ENCODE measurements at regions of chr17 and their contacts with region 1.

Region 1: DNA sequence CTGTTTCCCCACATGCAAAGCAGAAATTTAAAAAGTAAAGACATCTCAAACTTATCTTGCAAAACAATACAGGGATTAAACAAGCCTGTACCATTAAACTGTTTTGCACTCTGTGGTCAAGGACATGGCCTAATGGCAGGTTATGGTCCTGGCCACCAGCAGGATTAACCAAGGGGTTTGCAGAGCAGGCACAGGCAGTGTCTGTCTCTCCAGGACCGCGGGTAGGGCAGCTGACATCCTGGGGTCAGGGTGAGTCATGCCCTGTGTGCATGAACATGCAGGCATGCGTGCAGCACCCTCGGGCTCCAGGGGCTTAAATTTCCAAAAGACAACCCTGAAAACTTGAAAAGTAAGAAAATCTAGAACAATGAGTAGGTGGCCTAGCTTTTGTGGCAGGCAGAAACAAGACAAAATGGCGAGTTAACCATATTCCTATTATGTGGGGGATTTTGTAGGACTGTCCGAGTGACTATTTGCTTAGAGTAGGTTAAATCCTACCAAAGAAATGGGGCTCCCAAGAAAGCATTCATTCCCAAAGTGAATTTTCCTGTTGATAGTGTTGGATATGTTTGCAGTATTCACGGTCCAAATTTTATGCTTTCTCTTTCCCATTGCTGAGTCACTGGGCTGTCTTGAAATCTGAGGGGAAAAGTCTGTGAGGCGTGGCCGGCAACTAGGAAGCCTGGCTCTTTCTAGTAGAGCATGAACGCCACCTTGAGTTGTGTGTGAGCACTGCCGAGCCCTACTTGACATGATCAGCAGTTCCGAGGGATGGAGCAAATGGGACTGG is 158.4 kb upstream of the FAM20A start:
- DNase-seq: peak; percentile 86 to 89
- H3K4me3 ChIP-seq: peak overlapping the region; percentile 34
- H3K4me3 Mint-ChIP-seq: peak overlapping the region; percentile 77
- H3K27ac Mint-ChIP-seq: peak overlapping the region; percentile 89
- H3K4me1 ChIP-seq: peaks cover 13% of the 10 kb centered on the region
- H3K4me1 Mint-ChIP-seq: peaks cover 7% of the 10 kb centered on the region
- H3K27me3 ChIP-seq: no peaks in the 10 kb centered on the region
- H3K27me3 Mint-ChIP-seq: no peaks in the 10 kb centered on the region
- CTCF ChIP-seq: peak; percentile 92 to 93

Region 2: DNA sequence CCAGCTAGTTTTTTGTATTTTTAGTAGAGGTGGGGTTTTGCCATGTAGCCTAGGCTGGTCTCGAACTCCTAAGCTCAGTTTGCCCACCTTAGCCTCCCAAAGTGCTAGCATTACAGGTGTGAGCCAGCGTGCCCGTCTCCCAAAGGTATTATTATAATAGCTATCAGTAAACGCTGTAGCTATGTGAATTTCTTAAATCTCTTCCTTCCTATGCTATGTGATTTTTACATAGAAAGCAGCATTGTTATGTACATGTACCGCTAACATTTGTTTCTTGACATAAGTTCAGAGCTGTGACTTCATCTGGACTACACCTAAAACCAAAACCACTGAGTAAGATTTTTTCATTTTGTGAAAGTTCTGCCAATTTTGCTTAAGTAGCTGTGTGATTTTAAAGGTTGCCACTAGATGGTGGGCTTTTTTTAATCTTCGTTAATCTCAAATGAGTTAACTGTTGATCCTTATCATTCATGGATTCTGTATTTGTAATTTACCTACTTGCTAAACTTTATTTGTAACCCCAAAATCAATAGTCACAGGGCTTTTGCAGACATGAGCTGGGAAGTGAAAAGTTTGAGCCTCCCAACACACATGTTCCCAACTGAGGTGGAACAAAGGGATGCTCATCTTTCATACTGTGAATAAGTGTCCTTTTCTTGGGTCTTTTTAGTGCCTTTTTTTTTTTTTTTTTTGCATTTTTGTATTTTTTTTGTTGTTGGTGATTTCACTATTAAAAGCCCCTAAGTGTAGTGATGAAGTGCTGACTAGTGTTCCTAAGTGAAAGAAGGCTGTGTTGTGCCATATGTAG is 225.4 kb before region 1 on chr17:
- CTCF ChIA-PET with region 1: no interaction called
- POLR2A ChIA-PET with region 1: no interaction called
- intact Hi-C with region 1: loop called (anchors 1 kb)
- DNase-seq: no peak
- H3K4me3 ChIP-seq: no peak overlapping the region
- H3K4me3 Mint-ChIP-seq: no peak overlapping the region
- H3K27ac Mint-ChIP-seq: no peak overlapping the region
- H3K4me1 ChIP-seq: no peaks in the 10 kb centered on the region
- H3K4me1 Mint-ChIP-seq: no peaks in the 10 kb centered on the region
- H3K27me3 ChIP-seq: no peaks in the 10 kb centered on the region
- H3K27me3 Mint-ChIP-seq: no peaks in the 10 kb centered on the region
- CTCF ChIP-seq: peak in 1 of 2 experiments; percentile 49

Region 3: GRCh38 chr17:68608515-68609130 is 150.9 kb before region 1 on chr17:
- CTCF ChIA-PET with region 1: interaction called, 4 read pairs
- POLR2A ChIA-PET with region 1: no interaction called
- intact Hi-C with region 1: loop called (anchors 1 kb)
- DNase-seq: no peak
- H3K4me3 ChIP-seq: no peak overlapping the region
- H3K4me3 Mint-ChIP-seq: no peak overlapping the region
- H3K27ac Mint-ChIP-seq: no peak overlapping the region
- H3K4me1 ChIP-seq: no peaks in the 10 kb centered on the region
- H3K4me1 Mint-ChIP-seq: no peaks in the 10 kb centered on the region
- H3K27me3 ChIP-seq: no peaks in the 10 kb centered on the region
- H3K27me3 Mint-ChIP-seq: peaks cover 3% of the 10 kb centered on the region
- CTCF ChIP-seq: no peak

Region 4: GRCh38 chr17:68733241-68734176 is 26.0 kb before region 1 on chr17:
- CTCF ChIA-PET with region 1: no interaction called
- POLR2A ChIA-PET with region 1: no interaction called
- intact Hi-C with region 1: loop called (anchors 2 kb)
- DNase-seq: peak; percentile 82 to 95
- H3K4me3 ChIP-seq: no peak overlapping the region
- H3K4me3 Mint-ChIP-seq: peak overlapping the region; percentile 45
- H3K27ac Mint-ChIP-seq: peak overlapping the region; percentile 90
- H3K4me1 ChIP-seq: peaks cover 42% of the 10 kb centered on the region
- H3K4me1 Mint-ChIP-seq: peaks cover 38% of the 10 kb centered on the region
- H3K27me3 ChIP-seq: no peaks in the 10 kb centered on the region
- H3K27me3 Mint-ChIP-seq: no peaks in the 10 kb centered on the region
- CTCF ChIP-seq: no peak

Measured in Caco-2 (cell line).